Right cardiac atrium (tissue), 5 donors: ENCODE measurements at regions of chr9 and their contacts with region 1.

Region 1: DNA sequence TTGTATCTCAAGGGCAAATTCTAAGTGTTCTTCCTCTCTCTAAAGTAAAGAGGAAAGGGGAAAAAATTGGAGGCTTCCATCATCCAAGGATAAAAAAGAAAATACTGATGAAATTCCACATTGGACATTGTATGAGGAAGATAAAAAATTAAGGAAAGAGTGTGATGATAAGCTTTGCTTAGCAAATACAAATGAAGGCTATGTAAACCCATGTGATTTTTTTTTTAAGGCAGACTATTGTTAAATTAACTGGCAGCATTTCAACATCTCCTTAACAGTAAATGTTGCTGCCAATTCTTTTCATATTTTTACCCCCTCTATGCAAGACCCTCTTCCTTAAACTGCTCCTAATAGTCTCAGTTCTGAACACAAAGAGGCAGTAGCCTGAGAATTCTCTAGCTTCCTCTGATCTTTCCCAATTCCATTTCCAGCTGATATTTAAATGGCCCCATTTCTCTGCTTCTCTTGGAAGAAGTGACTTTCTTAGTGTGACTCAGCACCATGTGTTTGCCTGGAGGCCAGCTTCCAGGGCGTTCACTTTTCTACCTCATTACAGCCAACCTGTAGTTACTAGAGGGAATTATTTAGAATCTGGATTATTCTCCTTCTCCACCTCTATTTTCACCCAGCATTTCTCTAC is 159.7 kb downstream of the TLE1 start:
- DNase-seq: peak in 2 of 3 donors; percentile 34 to 65
- ATAC-seq: peak; percentile 85 to 94
- H3K4me3 ChIP-seq: no peak overlapping the region
- H3K27ac ChIP-seq: no peak overlapping the region
- H3K4me1 ChIP-seq: no peaks in the 10 kb centered on the region
- H3K27me3 ChIP-seq: no peaks in the 10 kb centered on the region

Region 2: GRCh38 chr9:81578606-81579005 is 48.9 kb after region 1 on chr9:
- intact Hi-C with region 1: no loop called
- DNase-seq: no peak
- ATAC-seq: no peak
- H3K4me3 ChIP-seq: no peak overlapping the region
- H3K27ac ChIP-seq: no peak overlapping the region
- H3K4me1 ChIP-seq: no peaks in the 10 kb centered on the region
- H3K27me3 ChIP-seq: no peaks in the 10 kb centered on the region

Region 3: GRCh38 chr9:81848472-81848871 is 318.8 kb after region 1 on chr9:
- intact Hi-C with region 1: loop called in 2 of 4 experiments (anchors 10 kb)
- DNase-seq: no peak
- ATAC-seq: peak in 1 of 2 donors; percentile 28
- H3K4me3 ChIP-seq: no peak overlapping the region
- H3K27ac ChIP-seq: no peak overlapping the region
- H3K4me1 ChIP-seq: peaks cover 5% of the 10 kb centered on the region
- H3K27me3 ChIP-seq: no peaks in the 10 kb centered on the region